Activated CD4-positive, alpha-beta T cell treated with anti-CD3 and anti-CD28 coated beads for 36 hours (primary cell): ENCODE measurements at regions of chr7 and their contacts with region 1.

Region 1: DNA sequence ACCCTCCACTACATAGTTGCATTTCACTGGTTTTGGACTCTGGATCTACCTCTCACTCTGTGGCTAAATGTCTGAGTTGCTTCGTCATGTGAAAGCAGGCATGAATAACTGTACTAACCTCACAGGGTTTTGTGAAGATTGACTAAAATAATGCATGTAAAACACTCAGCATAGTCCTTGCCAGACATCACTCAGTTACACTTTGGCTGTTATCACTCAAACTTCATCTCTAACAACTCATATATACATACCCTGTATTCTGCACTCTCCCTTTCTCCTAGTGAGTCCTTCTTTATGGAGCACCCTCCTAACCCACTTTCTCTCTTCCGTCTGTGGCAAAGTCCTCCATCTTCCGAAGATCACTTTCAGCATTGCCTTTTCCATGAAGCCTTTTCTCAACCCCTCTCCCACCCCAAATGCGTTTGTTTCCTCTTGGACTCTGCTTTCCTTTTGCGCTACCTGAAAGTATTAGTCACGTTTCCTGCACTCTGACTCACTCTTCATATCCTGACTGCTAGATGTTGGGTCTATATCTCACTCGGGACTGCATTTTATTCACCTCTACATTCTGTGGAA is 72.6 kb downstream of the OSBPL3 start:
- DNase-seq: peak; percentile 47
- ATAC-seq: peak; percentile 85
- H3K4me3 Mint-ChIP-seq: no peak overlapping the region
- H3K27ac Mint-ChIP-seq: no peak overlapping the region
- H3K4me1 Mint-ChIP-seq: peaks cover 43% of the 10 kb centered on the region
- H3K27me3 Mint-ChIP-seq: no peaks in the 10 kb centered on the region

Region 2: GRCh38 chr7:24135003-24135817 is 772.2 kb before region 1 on chr7:
- CTCF ChIA-PET with region 1: no interaction called
- POLR2A ChIA-PET with region 1: no interaction called
- intact Hi-C with region 1: no loop called
- DNase-seq: no peak
- ATAC-seq: no peak
- H3K4me3 Mint-ChIP-seq: no peak overlapping the region
- H3K27ac Mint-ChIP-seq: no peak overlapping the region
- H3K4me1 Mint-ChIP-seq: no peaks in the 10 kb centered on the region
- H3K27me3 Mint-ChIP-seq: peaks cover 24% of the 10 kb centered on the region

Region 3: DNA sequence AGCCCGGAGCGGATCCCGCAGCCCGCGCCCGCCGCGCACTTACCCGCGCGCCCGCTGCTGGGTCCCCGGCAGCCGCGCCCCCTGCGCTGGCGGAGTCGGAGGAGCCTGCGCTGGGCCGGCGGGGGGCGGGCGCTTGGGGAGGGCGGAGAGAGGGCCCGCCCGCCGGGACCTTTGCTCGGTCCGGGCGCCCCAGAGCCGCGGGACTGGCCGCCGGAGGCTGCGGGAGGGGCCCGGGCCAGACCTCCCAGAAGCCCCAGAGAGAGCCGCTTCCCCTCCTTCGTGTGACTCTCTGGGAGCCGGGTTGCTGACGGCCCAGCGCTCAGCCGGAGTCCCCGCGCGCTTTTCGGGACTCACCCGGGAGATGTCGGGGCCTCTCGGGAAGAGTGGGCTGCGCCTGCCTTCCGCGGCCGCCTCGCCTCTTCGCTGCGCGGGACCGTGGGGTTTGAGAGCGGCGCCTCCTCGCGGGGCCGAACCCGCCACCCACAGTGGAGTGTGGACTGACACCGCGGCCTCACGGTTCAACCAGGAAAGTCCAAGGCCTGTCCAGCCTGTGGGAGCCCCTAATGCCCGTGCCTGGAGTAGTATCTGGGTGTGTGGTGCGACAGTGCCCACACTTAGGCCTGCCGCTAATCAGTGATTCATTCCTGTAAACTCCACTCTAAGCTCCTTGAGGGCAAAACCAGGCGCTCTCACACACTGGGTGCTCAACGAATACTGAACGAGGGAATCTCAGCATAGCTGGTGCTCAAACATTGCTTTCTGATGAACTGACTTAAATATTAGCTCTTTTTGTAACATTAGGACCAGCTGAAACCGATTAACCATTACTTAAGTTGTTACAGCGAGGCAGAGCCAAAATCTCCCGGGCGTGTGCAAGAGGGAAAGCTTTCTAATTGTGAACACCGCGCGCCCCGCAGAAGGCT is 149.8 kb before region 1 on chr7 and contains the start of gene GSDME:
- CTCF ChIA-PET with region 1: no interaction called
- POLR2A ChIA-PET with region 1: no interaction called
- intact Hi-C with region 1: loop called in 1 of 2 experiments (anchors 1 kb)
- DNase-seq: peak; percentile 62
- ATAC-seq: peak; percentile 52
- H3K4me3 Mint-ChIP-seq: peak within 1 kb of the TSS; percentile 78
- H3K27ac Mint-ChIP-seq: peak within 1 kb of the TSS; percentile 85
- H3K4me1 Mint-ChIP-seq: peaks cover 33% of the 10 kb centered on the region
- H3K27me3 Mint-ChIP-seq: peaks cover 39% of the 10 kb centered on the region
- total RNA-seq, gene GSDME: 6.2 to 8.5 TPM

Region 4: GRCh38 chr7:24869572-24869971 is 37.8 kb before region 1 on chr7:
- CTCF ChIA-PET with region 1: no interaction called
- POLR2A ChIA-PET with region 1: no interaction called
- intact Hi-C with region 1: loop called (anchors 1 kb)
- DNase-seq: no peak
- ATAC-seq: no peak
- H3K4me3 Mint-ChIP-seq: no peak overlapping the region
- H3K27ac Mint-ChIP-seq: no peak overlapping the region
- H3K4me1 Mint-ChIP-seq: peaks cover 41% of the 10 kb centered on the region
- H3K27me3 Mint-ChIP-seq: no peaks in the 10 kb centered on the region

Region 5: GRCh38 chr7:24922099-24922773 is 14.8 kb after region 1 on chr7:
- CTCF ChIA-PET with region 1: interaction called, 5 read pairs
- POLR2A ChIA-PET with region 1: no interaction called
- intact Hi-C with region 1: loop called (anchors 1 kb)
- DNase-seq: no peak
- ATAC-seq: no peak
- H3K4me3 Mint-ChIP-seq: no peak overlapping the region
- H3K27ac Mint-ChIP-seq: peak overlapping the region; percentile 69
- H3K4me1 Mint-ChIP-seq: peaks cover 78% of the 10 kb centered on the region
- H3K27me3 Mint-ChIP-seq: no peaks in the 10 kb centered on the region

Region 6: DNA sequence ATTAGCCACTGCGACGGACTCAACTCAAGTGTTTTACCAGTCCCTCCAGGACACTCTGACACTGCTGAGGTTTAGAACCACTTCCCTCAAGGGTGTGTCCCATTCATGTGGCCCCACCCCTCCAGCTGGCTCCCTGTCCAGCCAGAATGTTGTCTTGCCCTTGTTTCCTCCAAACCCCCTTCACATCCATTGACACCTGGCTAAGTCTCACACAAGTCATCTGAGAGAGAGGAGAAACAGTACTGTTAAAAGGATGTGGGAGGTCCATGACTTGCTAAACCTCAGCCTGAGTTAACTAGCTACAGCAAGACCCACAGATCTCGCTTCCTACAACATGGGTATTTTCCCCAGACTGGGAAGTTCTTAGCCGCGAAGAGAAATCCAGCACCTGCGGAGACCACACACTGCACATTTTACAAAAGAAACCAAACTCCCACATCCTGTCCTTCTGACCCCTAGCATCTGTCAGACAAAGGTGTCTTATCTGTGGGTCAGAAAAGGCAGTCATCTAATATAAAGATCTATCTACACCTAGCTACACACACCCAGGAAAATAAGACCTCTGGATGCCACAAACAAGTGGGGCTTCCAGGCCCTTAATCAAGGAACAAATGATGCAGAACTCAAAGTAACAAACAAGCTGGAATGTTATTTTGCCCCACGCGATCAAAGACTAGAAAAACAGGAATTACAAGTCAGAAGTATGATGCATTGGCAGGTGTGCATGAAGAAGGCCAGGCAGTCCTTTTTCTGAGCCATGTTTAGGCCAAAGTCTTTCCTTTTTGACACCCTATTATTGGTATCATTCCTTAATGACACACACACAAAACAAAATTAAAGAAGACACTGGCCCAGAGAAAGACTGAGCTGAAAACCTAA is 58.7 kb after region 1 on chr7:
- CTCF ChIA-PET with region 1: interaction called, 3 read pairs
- POLR2A ChIA-PET with region 1: interaction called, 3 read pairs
- intact Hi-C with region 1: loop called (anchors 1 to 2 kb)
- DNase-seq: peak; percentile 51
- ATAC-seq: peak; percentile 86
- H3K4me3 Mint-ChIP-seq: no peak overlapping the region
- H3K27ac Mint-ChIP-seq: peak overlapping the region; percentile 70
- H3K4me1 Mint-ChIP-seq: peaks cover 81% of the 10 kb centered on the region
- H3K27me3 Mint-ChIP-seq: no peaks in the 10 kb centered on the region

Region 7: DNA sequence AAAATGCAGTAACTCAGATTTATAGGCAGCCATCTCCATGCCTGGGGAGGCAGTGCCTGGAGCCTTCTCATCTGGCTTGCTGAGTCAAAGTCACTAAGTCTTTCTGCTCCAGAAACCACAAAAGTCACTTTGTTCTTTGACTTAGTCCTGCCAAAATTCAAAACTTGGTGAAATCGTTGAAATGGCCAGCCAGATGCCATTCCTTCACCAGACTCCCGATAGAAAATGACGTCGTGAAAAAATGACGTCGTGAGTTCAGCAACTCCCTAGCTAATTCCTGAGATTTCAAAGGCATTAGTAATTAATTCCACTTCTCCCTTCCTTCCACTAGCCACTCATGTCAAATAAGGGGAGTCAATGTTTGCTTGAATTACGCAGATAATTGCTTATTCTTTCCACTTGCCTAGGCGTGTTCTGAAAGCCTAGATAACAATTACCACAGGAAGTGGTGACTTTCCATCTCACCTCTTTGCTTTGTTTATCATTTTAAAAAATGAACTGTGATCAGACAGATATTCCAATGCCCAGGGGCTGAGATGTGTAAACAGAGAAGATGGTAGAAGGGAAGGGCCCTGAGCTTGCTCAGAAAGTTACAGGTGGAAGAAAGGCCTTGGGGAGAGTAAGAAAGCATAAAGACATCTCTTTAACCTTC is 121.1 kb after region 1 on chr7:
- CTCF ChIA-PET with region 1: no interaction called
- POLR2A ChIA-PET with region 1: no interaction called
- intact Hi-C with region 1: loop called in 1 of 2 experiments (anchors 1 kb)
- DNase-seq: peak; percentile 50
- ATAC-seq: peak; percentile 89
- H3K4me3 Mint-ChIP-seq: peak overlapping the region; percentile 41
- H3K27ac Mint-ChIP-seq: peak overlapping the region; percentile 87
- H3K4me1 Mint-ChIP-seq: peaks cover 46% of the 10 kb centered on the region
- H3K27me3 Mint-ChIP-seq: no peaks in the 10 kb centered on the region

Region 8: GRCh38 chr7:25125137-25125946 is 217.9 kb after region 1 on chr7 and contains the start of gene CYCS:
- CTCF ChIA-PET with region 1: no interaction called
- POLR2A ChIA-PET with region 1: no interaction called
- intact Hi-C with region 1: loop called (anchors 2 kb)
- DNase-seq: peak; percentile 100
- ATAC-seq: peak; percentile 97
- H3K4me3 Mint-ChIP-seq: peak within 1 kb of the TSS; percentile 97
- H3K27ac Mint-ChIP-seq: peak within 1 kb of the TSS; percentile 98
- H3K4me1 Mint-ChIP-seq: peaks cover 27% of the 10 kb centered on the region
- H3K27me3 Mint-ChIP-seq: no peaks in the 10 kb centered on the region
- total RNA-seq, gene CYCS: 222 to 237 TPM